HEK293 (cell line): ENCODE measurements at regions of chr12 and their contacts with region 1.

Region 1: GRCh38 chr12:27940756-27941402 is 31.7 kb downstream of the PTHLH start:
- H3K4me3 ChIP-seq: no peak overlapping the region
- H3K27ac ChIP-seq: no peak overlapping the region
- H3K4me1 ChIP-seq: no peaks in the 10 kb centered on the region
- CTCF ChIP-seq: peak; percentile 30; the same call in 1 of the 2 replicates

Region 2: DNA sequence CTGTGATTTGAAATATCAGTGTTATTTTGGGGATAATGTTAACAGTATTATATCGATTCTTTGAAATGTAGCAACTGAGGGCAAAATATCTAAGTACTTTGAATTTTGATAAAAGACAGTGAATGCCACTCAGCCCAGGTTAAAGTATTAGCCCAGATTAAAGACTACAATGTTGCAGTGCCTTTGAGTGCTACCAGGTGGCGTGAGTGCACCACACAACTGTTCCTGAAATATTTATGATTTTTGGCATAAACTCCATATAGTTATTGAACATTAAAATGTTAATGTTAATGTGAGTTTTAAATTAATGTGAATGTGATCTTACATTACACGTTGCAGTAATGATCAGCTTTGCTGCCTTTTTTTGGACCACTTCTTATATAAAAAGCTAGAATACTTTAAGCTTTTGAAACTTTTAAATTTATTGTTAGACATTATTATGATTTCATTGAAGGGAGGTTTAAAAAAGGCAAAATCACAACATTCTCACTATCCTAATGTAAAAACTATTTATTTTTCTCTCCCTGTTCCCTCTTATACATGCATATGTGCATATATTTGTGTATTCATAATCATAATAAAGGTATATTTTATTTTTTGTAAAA is 207.7 kb before region 1 on chr12:
- CTCF ChIA-PET with region 1: interaction called, 34 read pairs
- POLR2A ChIA-PET with region 1: no interaction called
- H3K4me3 ChIP-seq: no peak overlapping the region
- H3K27ac ChIP-seq: no peak overlapping the region
- H3K4me1 ChIP-seq: no peaks in the 10 kb centered on the region
- CTCF ChIP-seq: no peak

Region 3: GRCh38 chr12:27952510-27952909 is 11.6 kb after region 1 on chr12:
- CTCF ChIA-PET with region 1: interaction called, 10 read pairs
- POLR2A ChIA-PET with region 1: no interaction called
- H3K4me3 ChIP-seq: no peak overlapping the region
- H3K27ac ChIP-seq: no peak overlapping the region
- H3K4me1 ChIP-seq: no peaks in the 10 kb centered on the region
- CTCF ChIP-seq: no peak

Region 4: DNA sequence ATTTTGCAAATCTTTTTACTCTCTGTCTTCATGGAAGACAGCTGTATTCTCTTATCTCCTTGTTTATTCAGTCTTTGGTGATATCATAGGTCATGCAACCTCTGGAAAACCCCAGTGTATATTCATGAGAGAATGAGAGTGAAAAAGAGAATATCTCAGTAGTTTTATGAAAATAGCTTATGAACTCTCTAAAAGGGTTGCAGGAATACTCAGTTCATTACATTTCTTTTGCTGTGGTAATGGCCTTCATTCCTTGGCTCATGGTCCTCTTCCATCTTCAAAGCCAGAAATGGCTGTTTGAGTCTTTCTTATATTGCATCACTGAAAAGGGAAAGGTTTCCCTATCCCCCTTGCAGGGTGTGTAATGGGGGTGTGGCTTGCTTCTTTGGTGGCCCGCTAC is 399.4 kb after region 1 on chr12:
- CTCF ChIA-PET with region 1: no interaction called
- POLR2A ChIA-PET with region 1: no interaction called
- H3K4me3 ChIP-seq: no peak overlapping the region
- H3K27ac ChIP-seq: no peak overlapping the region
- H3K4me1 ChIP-seq: no peaks in the 10 kb centered on the region
- CTCF ChIP-seq: no peak